ENCODE measurements at regions of chr10 and their contacts with region 1.

Region 1: DNA sequence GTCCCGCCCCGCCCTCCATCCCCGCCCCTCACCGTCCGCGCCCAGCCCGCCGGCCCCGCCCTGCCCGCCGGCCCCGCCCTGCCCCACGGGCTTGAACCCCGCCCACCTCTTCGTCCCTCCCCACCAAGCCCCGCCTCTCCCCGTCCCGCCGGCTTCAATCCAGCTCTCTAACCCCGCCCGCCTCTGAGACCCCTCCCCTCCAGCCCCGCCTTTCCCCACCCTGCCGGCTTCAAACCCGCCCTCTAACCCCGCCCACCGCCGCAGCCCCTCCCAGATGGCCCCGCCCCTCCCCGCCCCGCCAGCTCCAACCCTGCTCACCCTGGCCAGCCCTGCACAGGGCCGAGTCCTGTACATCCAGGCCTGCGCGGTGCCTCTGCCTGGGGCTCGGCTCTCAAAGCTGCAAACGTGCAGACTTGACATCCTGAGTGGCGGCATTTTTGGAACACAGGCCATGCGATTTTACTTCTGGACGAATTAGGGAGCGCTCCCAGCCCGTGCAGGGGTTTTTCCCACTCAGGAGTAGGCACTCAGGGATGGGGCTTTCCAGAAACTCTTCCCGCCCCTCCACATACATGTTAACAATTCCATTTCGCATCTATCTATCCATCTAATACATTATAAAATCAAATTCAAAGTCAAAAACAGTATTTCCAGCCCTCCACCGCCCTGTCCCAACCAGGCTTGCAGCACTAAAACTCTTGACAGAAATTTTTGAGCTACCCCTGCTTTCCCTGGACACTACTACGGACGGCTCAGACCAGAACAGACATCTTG is 475 bp upstream of the NMT2 start:
- DNase-seq: peak; percentile 99
- H3K4me3 Mint-ChIP-seq: peak overlapping the region; percentile 74
- H3K27ac Mint-ChIP-seq: peak overlapping the region; percentile 76
- H3K4me1 Mint-ChIP-seq: peaks cover 49% of the 10 kb centered on the region
- H3K27me3 Mint-ChIP-seq: no peaks in the 10 kb centered on the region

Region 2: DNA sequence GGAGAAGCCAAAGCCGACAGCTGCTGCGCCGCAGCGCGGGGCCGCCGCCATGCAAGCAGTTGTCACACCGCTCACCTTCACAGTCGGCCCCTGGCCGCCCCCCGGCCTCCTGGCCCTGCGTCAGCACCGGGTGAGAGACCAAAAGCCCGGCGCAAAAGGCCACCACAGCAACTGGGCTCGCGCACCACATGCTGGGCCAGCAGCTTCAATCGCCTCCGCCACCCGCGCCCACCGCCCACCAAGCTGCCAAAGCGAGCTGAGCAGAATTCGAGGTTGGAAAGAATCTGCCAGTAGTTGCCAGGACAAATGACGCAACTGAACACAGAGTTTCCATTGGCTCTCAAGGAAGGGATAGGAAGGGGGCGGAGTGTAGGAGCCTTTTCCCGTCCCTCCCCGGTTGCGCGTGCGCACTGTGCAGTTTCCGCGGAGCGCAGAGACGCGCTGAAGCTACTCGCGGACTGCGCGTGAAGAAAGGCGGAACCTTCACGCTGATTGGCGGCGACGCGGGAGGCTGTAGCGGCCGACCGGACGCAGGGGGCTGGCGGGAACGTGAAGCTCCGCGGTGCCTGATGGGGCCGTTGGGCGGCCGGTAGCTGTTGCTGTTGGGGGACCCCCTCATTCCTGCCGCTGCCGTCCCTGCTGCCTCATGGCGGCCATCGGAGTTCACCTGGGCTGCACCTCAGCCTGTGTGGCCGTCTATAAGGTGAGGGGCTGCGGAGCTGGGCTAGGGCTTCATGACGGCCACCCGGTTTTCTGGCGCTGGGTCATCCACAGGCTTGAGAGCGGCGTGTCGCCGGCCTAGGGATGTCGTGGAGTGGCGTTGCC is 331.0 kb before region 1 on chr10 and contains the starts of genes CDNF, HSPA14 and MSANTD7:
- CTCF ChIA-PET with region 1: no interaction called
- intact Hi-C with region 1: loop called (anchors 1 kb)
- DNase-seq: peak; percentile 99
- H3K4me3 Mint-ChIP-seq: peak within 1 kb of the TSS; percentile 92
- H3K27ac Mint-ChIP-seq: peak within 1 kb of the TSS; percentile 93
- H3K4me1 Mint-ChIP-seq: peaks cover 22% of the 10 kb centered on the region
- H3K27me3 Mint-ChIP-seq: no peaks in the 10 kb centered on the region
- total RNA-seq, gene CDNF: 1.6 to 1.8 TPM
- total RNA-seq, gene HSPA14: 28.1 to 29.9 TPM
- total RNA-seq, gene MSANTD7: 19.6 to 21.3 TPM

Region 3: DNA sequence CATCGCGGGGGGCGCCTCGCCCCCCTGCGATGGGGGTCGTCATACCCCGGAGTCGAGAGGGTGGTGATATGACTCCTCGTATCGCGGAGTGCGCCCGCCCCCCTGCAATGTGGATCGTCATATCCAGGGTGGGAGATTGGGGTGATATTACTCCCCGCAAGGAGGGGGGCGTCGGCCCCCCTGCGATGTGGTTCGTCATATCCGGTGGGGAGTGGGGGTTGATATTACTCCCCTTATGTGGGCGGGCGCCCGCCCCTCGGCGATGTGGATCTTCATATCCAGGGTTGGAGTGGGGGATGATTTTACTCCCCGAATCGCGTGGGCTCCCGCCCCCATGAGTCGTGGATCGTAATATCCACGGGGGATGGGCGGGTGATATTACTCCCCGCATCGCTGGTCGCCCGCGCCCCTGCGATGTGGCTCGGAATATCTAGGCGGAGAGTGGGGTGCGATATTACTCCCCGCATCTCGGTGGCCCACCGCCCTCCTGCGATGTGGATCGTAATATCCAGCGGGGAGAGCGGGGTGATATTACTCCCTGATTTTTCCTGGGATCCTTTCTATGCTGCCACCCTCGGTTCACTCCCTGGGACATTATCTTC is 172.9 kb before region 1 on chr10:
- CTCF ChIA-PET with region 1: interaction called, 5 read pairs
- intact Hi-C with region 1: loop called (anchors 1 kb)
- DNase-seq: no peak
- H3K4me3 Mint-ChIP-seq: peak overlapping the region; percentile 13
- H3K27ac Mint-ChIP-seq: no peak overlapping the region
- H3K4me1 Mint-ChIP-seq: peaks cover 7% of the 10 kb centered on the region
- H3K27me3 Mint-ChIP-seq: peaks cover 3% of the 10 kb centered on the region

Region 4: GRCh38 chr10:15122477-15123030 is 46.4 kb before region 1 on chr10:
- CTCF ChIA-PET with region 1: interaction called, 4 read pairs
- intact Hi-C with region 1: loop called (anchors 1 kb)
- DNase-seq: peak; percentile 59
- H3K4me3 Mint-ChIP-seq: no peak overlapping the region
- H3K27ac Mint-ChIP-seq: peak overlapping the region; percentile 86
- H3K4me1 Mint-ChIP-seq: peaks cover 32% of the 10 kb centered on the region
- H3K27me3 Mint-ChIP-seq: no peaks in the 10 kb centered on the region

Region 5: GRCh38 chr10:15209827-15210509 is 41.0 kb after region 1 on chr10:
- CTCF ChIA-PET with region 1: interaction called, 4 read pairs
- intact Hi-C with region 1: loop called (anchors 1 kb)
- DNase-seq: peak; percentile 92
- H3K4me3 Mint-ChIP-seq: no peak overlapping the region
- H3K27ac Mint-ChIP-seq: no peak overlapping the region
- H3K4me1 Mint-ChIP-seq: peaks cover 53% of the 10 kb centered on the region
- H3K27me3 Mint-ChIP-seq: no peaks in the 10 kb centered on the region

Region 6: GRCh38 chr10:15571575-15571974 is 402.6 kb after region 1 on chr10:
- CTCF ChIA-PET with region 1: no interaction called
- intact Hi-C with region 1: no loop called
- DNase-seq: no peak
- H3K4me3 Mint-ChIP-seq: no peak overlapping the region
- H3K27ac Mint-ChIP-seq: no peak overlapping the region
- H3K4me1 Mint-ChIP-seq: no peaks in the 10 kb centered on the region
- H3K27me3 Mint-ChIP-seq: peaks cover 3% of the 10 kb centered on the region

Region 7: GRCh38 chr10:16436758-16437539 is 1268.0 kb after region 1 on chr10 and contains the start of gene PTER:
- CTCF ChIA-PET with region 1: no interaction called
- intact Hi-C with region 1: loop called (anchors 2 kb)
- DNase-seq: peak; percentile 100
- H3K4me3 Mint-ChIP-seq: peak within 1 kb of the TSS; percentile 85
- H3K27ac Mint-ChIP-seq: peak within 1 kb of the TSS; percentile 88
- H3K4me1 Mint-ChIP-seq: peaks cover 43% of the 10 kb centered on the region
- H3K27me3 Mint-ChIP-seq: no peaks in the 10 kb centered on the region
- total RNA-seq, gene PTER: 15.0 to 16.7 TPM